Aorta (tissue), 5 donors: ENCODE measurements at regions of chr10 and their contacts with region 1.

Region 1: DNA sequence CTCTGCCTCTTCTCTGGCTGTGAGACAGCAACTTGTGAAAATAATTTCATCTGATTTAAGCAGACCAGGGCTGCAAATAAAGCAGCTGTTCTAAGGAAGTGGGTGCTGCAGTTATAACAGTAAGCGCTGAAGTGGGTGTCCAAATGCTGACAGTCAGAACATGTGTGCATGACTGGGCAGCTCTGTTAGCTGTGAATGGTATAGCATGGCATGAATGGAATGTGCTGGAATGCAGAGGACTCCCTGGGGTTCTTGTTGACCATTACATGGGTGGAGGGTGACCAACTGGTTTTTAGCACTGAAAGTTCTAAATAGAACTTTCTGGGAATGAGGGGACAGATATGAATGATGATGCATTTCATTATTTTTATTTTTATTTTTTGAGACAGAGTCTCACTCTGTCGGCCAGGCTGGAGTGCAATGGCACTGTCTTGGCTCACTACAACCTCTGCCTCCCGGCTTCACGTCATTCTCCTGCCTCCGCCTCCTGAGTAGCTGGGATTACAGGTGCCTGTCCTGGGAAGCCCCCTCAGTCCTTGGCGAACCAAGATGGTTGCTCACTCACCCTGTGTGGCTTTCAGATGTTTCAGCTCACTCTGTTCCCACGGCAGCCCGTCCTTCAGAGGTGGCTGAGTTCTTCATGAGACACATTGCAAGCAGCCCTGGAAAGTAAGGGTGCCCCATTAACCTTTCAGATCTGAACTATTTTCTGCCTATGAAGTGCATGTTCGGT is 319.8 kb upstream of the PHYHIPL start:
- DNase-seq: peak in 1 of 2 donors; percentile 58
- ATAC-seq: peak; percentile 77
- H3K4me3 ChIP-seq: no peak overlapping the region
- H3K27ac ChIP-seq: peak overlapping the region in 1 of 2 donors; percentile 87
- H3K4me1 ChIP-seq: peaks cover 0 to 3% of the 10 kb centered on the region in 2 donors
- H3K27me3 ChIP-seq: no peaks in the 10 kb centered on the region

Region 2: GRCh38 chr10:58791137-58791536 is 65.5 kb before region 1 on chr10:
- intact Hi-C with region 1: loop called (anchors 2 kb)
- DNase-seq: no peak
- ATAC-seq: peak; percentile 70
- H3K4me3 ChIP-seq: no peak overlapping the region
- H3K27ac ChIP-seq: peak overlapping the region in 1 of 2 donors; percentile 12
- H3K4me1 ChIP-seq: no peaks in the 10 kb centered on the region
- H3K27me3 ChIP-seq: no peaks in the 10 kb centered on the region

Region 3: DNA sequence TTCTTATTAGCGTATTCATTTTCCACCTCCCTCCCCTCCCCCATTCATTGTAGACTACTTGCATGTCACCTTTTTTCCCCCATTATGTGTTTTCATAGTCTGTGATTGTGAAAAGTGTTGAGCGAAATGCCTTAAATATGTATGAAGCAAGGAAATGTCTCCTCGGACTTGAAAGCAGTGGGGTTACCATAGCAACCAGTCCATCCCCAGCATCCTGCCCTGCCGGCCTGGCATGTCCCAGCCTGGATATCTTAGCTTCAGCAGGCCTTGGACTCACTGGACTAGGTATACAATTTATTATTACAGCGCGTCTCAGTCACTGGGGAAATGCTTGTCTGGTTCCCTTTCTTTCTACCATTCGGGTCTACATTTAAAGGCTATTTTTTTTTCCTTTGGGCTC is 60.4 kb before region 1 on chr10:
- intact Hi-C with region 1: loop called (anchors 2 kb)
- DNase-seq: no peak
- ATAC-seq: no peak
- H3K4me3 ChIP-seq: no peak overlapping the region
- H3K27ac ChIP-seq: no peak overlapping the region
- H3K4me1 ChIP-seq: no peaks in the 10 kb centered on the region
- H3K27me3 ChIP-seq: no peaks in the 10 kb centered on the region

Region 4: DNA sequence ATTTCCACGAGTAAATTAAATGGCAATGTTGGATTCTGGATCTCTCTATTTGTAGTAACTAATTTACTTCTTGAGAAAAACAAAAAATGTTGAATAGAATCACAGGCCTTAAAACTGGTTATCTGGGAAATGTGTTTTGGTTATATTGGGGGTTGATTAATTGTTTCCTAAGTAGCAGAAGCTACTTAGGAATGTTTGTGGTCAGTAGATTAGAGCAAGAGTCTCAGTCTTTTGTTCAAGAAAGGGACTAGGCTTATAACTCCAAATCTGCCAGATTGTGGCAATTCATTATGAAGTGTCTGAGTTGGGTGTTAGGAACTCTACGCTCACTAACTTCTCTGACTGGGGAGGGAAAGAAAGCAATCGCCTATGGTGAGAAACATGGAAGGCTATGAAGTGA is 75.5 kb after region 1 on chr10:
- intact Hi-C with region 1: no loop called
- DNase-seq: no peak
- ATAC-seq: no peak
- H3K4me3 ChIP-seq: no peak overlapping the region
- H3K27ac ChIP-seq: no peak overlapping the region
- H3K4me1 ChIP-seq: no peaks in the 10 kb centered on the region
- H3K27me3 ChIP-seq: no peaks in the 10 kb centered on the region